ENCODE measurements at regions of chr1 and their contacts with region 1.

Region 1: GRCh38 chr1:212477014-212477679 is 44.4 kb downstream of the NENF start:
- DNase-seq: peak; percentile 79
- ATAC-seq: peak; percentile 96

Region 2: GRCh38 chr1:212368073-212368484 is 109.1 kb before region 1 on chr1:
- intact Hi-C with region 1: no loop called
- DNase-seq: no peak
- ATAC-seq: peak; percentile 76

Region 3: DNA sequence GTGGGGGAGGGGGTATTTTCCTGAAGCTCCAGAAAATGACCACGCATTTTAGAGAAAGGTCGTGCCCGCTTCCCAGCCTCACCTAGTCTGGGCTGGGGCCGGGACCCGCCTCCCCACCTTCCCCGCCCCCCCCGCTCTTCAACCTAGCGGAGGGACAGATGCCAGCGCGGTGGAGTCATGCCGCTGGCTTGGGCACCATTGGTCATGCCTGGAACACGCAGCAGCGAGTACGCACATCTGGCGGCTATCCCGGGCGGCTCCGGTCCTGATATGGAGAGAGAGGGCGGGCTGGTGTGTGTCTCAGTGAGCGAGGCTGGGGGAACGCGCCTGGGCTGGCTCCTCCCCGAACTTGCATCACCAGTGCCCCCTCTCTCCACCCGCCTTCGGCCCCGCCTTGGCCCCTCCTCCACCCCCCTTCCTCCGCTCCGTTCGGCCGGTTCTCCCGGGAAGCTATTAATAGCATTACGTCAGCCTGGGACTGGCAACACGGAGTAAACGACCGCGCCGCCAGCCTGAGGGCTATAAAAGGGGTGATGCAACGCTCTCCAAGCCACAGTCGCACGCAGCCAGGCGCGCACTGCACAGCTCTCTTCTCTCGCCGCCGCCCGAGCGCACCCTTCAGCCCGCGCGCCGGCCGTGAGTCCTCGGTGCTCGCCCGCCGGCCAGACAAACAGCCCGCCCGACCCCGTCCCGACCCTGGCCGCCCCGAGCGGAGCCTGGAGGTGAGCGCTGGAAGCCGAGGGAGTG is 131.2 kb after region 1 on chr1 and contains the start of gene ATF3:
- intact Hi-C with region 1: loop called (anchors 2 kb)
- DNase-seq: peak; percentile 100
- ATAC-seq: peak; percentile 95
- total RNA-seq, gene ATF3: 15.4 TPM

Region 4: DNA sequence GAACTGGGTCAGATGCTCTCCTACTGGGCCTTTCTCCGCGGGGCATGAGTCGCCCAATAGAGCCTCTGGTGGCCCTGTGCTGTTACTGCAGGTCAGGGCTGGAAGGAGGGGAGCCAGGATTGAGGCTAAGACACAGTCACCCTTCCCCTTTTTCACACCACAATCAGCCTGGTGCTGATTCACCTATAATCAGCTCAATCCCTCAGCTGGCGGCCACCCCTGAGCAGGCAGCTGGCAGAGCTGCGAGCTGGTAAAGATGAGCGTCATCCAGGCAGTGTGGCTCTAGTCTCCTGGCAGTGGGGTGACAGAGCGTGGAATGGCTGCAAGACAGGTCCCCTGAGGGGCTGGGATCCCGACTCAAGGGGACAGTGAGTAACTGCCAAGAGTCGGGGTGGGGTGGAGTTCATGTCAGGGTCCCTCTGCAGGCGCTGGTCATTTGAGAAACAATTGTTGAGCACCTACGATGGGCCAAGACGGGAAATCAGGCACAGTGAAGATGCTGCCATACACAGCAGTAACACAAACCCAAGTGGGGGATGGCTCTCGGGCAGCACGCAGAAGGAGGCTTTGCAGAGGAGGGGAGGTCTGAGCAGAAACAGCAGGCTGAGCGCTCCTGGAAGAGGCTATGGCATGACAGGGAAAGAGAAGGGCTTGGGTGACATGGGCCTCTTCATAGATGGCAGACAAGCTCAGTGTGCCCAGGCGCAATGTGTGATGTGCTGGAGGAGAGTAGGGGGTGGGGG is 153.2 kb after region 1 on chr1:
- intact Hi-C with region 1: loop called (anchors 5 kb)
- DNase-seq: peak; percentile 75
- ATAC-seq: peak; percentile 93

Region 5: DNA sequence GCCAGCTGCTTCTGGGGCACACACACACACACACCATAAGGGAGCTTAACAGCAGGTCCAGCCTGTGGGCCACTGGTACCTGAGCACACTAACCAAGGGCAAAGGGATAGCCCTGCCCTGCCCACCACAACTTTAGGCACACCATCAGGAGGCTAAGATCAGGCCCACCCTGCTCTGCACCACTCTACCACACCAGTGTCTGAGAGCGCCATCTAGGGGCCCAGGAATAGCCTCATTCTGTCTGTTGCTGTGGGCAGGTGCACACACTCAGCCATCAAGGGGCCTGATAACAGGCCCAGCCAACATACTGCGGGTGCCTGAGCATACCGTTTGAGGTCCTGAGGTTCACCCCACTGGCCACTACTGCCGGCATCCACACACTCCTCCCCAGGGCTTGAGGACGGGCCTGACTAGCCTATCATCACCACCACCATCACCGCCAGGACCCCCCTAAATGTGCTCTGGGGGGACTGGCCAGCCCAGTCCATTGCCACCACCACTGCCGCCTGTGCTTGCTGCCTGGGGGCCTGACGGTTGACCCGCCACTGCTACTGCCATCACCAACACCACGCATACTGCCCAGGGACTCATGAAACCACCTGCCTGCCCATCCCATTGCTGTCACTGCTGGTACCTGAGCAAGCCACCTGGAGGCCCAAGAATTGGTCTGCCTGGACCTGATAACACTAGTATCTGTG is 283.1 kb after region 1 on chr1:
- intact Hi-C with region 1: no loop called
- DNase-seq: no peak
- ATAC-seq: peak; percentile 31

Region 6: DNA sequence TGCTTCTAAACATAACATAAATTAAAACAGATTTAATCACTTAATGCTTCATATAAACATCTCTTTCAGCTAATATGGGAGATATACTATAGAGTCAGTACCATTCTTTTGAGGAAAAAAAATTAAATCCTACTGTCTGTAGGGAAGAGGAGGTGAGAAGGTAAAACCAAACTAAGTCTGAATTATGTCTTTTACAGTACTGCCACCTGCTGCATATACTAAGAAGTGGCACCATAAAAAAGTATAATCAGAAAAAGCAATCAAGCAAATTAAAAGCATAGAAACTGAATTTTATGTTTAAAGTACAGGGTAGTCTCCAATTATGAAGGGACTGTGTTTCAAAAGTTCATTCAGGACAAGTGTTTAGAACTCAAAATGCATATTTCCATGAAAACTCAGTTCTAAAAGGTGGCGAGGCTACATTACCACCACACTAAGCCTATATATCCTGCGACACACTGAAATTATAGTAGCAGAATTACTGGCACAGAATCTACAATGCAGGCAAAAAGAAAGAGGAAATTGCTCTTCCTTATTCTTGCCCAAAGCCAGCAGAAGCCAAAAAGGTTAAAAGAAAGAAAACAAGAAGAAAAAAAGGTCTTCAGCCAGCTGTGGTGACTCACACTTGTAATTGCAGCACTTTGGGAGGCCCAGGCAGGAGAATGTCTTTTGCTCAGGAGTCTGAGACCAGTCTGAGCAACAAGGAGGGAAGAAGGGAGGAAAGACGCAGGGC is 305.4 kb after region 1 on chr1:
- intact Hi-C with region 1: loop called (anchors 10 kb)
- DNase-seq: no peak
- ATAC-seq: peak; percentile 55